ENCODE measurements at regions of chr1 and their contacts with region 1.

Region 1: GRCh38 chr1:161962091-161962887 is 61.4 kb downstream of the OLFML2B start:
- DNase-seq: peak; percentile 80
- H3K4me3 Mint-ChIP-seq: peak overlapping the region; percentile 85
- H3K27ac Mint-ChIP-seq: peak overlapping the region; percentile 88
- H3K4me1 Mint-ChIP-seq: peaks cover 25% of the 10 kb centered on the region
- H3K27me3 Mint-ChIP-seq: no peaks in the 10 kb centered on the region

Region 2: DNA sequence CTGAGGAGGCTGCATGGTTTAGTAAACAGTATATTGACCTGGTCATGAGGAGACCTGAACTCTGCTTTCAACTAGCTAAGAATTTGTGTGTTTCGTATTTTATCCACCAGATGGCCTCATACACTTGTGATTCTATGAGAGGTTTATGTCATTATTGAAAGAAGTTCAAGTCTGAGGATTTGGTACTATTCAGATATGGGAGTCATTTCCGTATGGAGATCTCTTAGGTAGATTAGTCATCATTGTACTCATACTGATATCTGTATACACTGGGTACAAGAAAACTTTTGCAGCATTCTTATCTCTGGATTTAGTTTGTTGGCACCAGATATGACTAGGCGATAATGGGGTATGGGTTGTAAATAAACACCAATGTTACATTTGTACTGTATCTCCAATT is 169.5 kb before region 1 on chr1:
- intact Hi-C with region 1: loop called (anchors 1 kb)
- DNase-seq: peak; percentile 73
- H3K4me3 Mint-ChIP-seq: no peak overlapping the region
- H3K27ac Mint-ChIP-seq: peak overlapping the region; percentile 10
- H3K4me1 Mint-ChIP-seq: peaks cover 23% of the 10 kb centered on the region
- H3K27me3 Mint-ChIP-seq: no peaks in the 10 kb centered on the region

Region 3: GRCh38 chr1:161915051-161915503 is 47.2 kb before region 1 on chr1:
- intact Hi-C with region 1: loop called (anchors 1 kb)
- DNase-seq: peak; percentile 60
- H3K4me3 Mint-ChIP-seq: no peak overlapping the region
- H3K27ac Mint-ChIP-seq: no peak overlapping the region
- H3K4me1 Mint-ChIP-seq: peaks cover 16% of the 10 kb centered on the region
- H3K27me3 Mint-ChIP-seq: no peaks in the 10 kb centered on the region

Region 4: GRCh38 chr1:161933592-161934588 is 28.4 kb before region 1 on chr1:
- intact Hi-C with region 1: loop called (anchors 1 kb)
- DNase-seq: peak; percentile 76
- H3K4me3 Mint-ChIP-seq: peak overlapping the region; percentile 15
- H3K27ac Mint-ChIP-seq: peak overlapping the region; percentile 62
- H3K4me1 Mint-ChIP-seq: peaks cover 27% of the 10 kb centered on the region
- H3K27me3 Mint-ChIP-seq: no peaks in the 10 kb centered on the region

Region 5: GRCh38 chr1:162035241-162035640 is 73.0 kb after region 1 on chr1:
- intact Hi-C with region 1: loop called (anchors 5 kb)
- DNase-seq: no peak
- H3K4me3 Mint-ChIP-seq: no peak overlapping the region
- H3K27ac Mint-ChIP-seq: no peak overlapping the region
- H3K4me1 Mint-ChIP-seq: peaks cover 5% of the 10 kb centered on the region
- H3K27me3 Mint-ChIP-seq: peaks cover 33% of the 10 kb centered on the region

Region 6: DNA sequence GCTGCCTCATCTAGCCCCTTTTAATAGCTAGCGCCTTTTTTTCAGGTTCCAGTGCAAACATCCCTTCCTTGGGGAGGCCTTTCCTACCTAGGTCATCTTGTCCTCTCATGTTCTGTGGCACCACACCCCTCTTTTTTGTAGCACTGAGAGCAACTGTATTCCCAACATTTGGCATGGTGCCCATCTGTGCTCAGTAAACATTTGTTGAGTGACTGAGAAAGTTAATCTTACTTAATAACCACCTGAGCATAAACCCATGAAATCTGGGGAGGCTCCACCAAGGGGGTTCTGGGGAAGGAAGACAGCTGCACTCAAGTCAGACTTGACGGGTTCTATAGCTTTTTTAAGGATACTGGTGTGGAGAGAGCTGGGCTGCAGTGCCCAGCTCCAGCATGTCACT is 197.2 kb after region 1 on chr1:
- intact Hi-C with region 1: no loop called
- DNase-seq: no peak
- H3K4me3 Mint-ChIP-seq: no peak overlapping the region
- H3K27ac Mint-ChIP-seq: no peak overlapping the region
- H3K4me1 Mint-ChIP-seq: no peaks in the 10 kb centered on the region
- H3K27me3 Mint-ChIP-seq: peaks cover 18% of the 10 kb centered on the region

Measured in activated CD4-positive, alpha-beta T cell treated with anti-CD3 and anti-CD28 coated beads, Interleukin-2, amount 10 ng/mL, durations not matched to agents 24 days and 14 days (primary cell).